ENCODE measurements at regions of chr3 and their contacts with region 1.

Region 1: DNA sequence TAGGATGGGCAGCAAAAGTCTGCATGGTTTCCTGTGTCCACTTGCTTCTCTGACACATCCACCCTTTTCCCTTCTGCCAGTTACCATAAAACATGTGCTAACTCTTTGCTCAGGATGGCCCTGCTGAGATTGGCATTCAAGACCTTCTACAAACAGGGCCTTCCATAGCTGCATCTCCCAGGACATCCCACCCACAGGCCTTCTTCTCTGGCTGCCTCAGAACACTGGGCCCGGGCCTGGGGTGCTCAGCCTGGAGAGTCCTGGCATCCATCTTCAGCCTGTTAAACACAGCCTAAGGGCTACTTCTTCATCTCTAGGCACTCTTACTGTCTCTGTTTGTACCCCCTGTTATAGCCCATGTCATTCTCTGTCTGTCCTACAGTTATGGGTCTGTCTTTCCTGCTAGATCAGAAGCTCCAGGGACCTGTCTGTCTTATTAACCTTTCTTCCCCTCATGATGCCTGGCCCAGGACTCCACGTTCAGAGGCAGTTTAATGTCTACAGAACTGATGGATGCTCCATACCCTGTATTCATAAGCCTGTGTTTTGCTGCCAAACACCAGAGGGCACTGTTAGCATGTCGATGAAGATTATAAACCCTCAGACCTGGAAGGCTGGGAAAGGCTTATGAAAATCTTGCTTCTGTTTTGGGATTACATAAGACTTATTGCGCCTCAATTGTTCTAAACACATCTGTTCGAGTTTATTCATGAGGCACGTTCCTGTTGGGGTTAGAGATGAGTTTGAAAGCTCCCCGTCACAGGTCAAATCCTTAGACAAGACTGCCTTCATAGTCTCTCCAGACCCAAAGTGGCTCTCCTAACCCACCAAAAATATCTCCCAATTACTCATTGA is 16.5 kb downstream of the SEMA3G start:
- DNase-seq: peak; percentile 70
- H3K4me3 ChIP-seq: no peak overlapping the region
- H3K27ac ChIP-seq: no peak overlapping the region
- H3K4me1 ChIP-seq: no peaks in the 10 kb centered on the region
- H3K27me3 ChIP-seq: no peaks in the 10 kb centered on the region
- CTCF ChIP-seq: peak in 3 of 4 experiments; percentile 79 to 85 (median 80)
- POLR2A ChIP-seq: no peak

Region 2: GRCh38 chr3:52270252-52270754 is 158.1 kb before region 1 on chr3:
- intact Hi-C with region 1: no loop called
- DNase-seq: no peak
- H3K4me3 ChIP-seq: no peak overlapping the region
- H3K27ac ChIP-seq: peak overlapping the region in 1 of 2 donors; percentile 19
- H3K4me1 ChIP-seq: peaks cover 15% of the 10 kb centered on the region
- H3K27me3 ChIP-seq: no peaks in the 10 kb centered on the region
- CTCF ChIP-seq: no peak
- POLR2A ChIP-seq: no peak

Region 3: GRCh38 chr3:52446631-52447511 is 18.5 kb after region 1 on chr3:
- intact Hi-C with region 1: loop called (anchors 2 kb)
- DNase-seq: peak; percentile 39
- H3K4me3 ChIP-seq: no peak overlapping the region
- H3K27ac ChIP-seq: no peak overlapping the region
- H3K4me1 ChIP-seq: no peaks in the 10 kb centered on the region
- H3K27me3 ChIP-seq: no peaks in the 10 kb centered on the region
- CTCF ChIP-seq: peak; percentile 97 to 100 (median 98)
- POLR2A ChIP-seq: no peak

Region 4: DNA sequence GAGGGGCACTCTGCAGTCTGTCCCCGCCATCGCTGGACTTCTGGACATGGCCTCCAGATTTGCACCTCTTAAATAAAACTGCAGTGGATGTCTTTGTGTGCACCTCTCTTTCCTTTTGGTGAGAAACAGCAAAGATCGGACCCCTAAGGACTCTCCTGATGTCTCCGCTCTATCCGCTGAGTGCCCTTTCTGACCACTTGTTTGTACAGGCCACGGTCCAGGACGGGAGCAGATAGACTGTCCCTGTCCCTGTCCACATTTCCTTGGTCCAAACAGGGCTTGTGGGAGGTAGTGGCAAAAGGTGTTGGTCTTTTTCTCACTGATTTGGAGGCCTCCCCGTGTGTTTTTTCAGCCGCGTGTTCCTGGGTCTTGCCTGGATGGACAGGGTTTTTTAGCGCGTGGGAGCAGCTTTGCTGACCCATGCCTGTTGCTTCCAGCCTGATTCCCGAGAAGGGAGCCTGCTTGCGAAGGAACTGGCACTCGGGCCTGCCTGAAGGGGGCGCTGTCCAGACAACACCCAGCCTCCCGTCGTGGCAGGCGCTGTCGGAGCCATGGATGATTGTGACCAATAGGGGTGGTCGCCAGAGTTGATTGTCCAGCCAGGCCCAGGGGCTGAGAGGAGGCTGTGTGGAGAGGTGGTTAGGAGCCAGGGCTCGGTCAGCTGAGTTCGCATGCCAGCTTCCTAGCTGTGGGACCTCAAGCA is 53.6 kb after region 1 on chr3:
- intact Hi-C with region 1: no loop called
- DNase-seq: no peak
- H3K4me3 ChIP-seq: no peak overlapping the region
- H3K27ac ChIP-seq: peak overlapping the region; percentile 31 to 72
- H3K4me1 ChIP-seq: no peaks in the 10 kb centered on the region
- H3K27me3 ChIP-seq: no peaks in the 10 kb centered on the region
- CTCF ChIP-seq: peak in 3 of 4 experiments; percentile 15 to 23 (median 22)
- POLR2A ChIP-seq: no peak

Region 5: DNA sequence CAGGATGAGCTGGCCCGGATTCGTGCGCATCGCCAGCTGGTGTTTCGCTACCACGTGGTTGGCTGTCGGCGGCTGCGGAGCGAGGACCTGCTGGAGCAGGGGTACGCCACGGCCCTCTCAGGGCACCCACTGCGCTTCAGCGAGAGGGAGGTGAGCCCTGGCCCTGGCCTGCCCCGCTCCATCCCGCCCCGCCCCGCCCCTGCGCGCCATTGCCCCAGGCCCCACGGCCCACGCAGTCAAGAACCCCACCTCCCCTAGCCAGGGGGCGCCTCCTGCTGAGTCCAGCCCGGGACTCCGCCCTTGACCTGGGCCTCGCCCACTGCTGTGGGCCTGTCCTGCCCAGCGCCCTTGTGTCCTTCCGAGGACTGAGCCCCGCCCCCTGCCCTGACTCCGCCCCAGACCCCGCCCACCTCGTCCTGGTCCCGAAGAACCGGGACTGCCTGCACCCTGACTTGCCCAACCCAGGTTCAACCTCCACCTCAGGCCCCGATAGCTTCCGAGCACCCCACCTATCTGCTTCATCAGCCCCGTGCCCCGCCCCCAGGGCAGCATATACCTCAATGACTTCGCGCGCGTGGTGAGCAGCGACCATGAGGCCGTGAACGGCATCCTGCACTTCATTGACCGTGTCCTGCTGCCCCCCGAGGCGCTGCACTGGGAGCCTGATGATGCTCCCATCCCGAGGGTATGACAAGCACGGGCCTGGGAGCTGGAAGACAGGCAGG is 90.5 kb after region 1 on chr3:
- intact Hi-C with region 1: no loop called
- DNase-seq: no peak
- H3K4me3 ChIP-seq: no peak overlapping the region
- H3K27ac ChIP-seq: no peak overlapping the region
- H3K4me1 ChIP-seq: no peaks in the 10 kb centered on the region
- H3K27me3 ChIP-seq: no peaks in the 10 kb centered on the region
- CTCF ChIP-seq: no peak
- POLR2A ChIP-seq: no peak

Region 6: GRCh38 chr3:52752045-52752660 is 323.8 kb after region 1 on chr3:
- intact Hi-C with region 1: no loop called
- DNase-seq: no peak
- H3K4me3 ChIP-seq: no peak overlapping the region
- H3K27ac ChIP-seq: no peak overlapping the region
- H3K4me1 ChIP-seq: no peaks in the 10 kb centered on the region
- H3K27me3 ChIP-seq: no peaks in the 10 kb centered on the region
- CTCF ChIP-seq: no peak
- POLR2A ChIP-seq: no peak